Mammary epithelial cell (primary cell): ENCODE measurements at regions of chr1 and their contacts with region 1.

Region 1: GRCh38 chr1:7401814-7402537 is 369.1 kb upstream of the VAMP3 start:
- DNase-seq: peak; percentile 99
- H3K4me3 ChIP-seq: no peak overlapping the region
- H3K27ac ChIP-seq: peak overlapping the region; percentile 64
- H3K4me1 ChIP-seq: peaks cover 11% of the 10 kb centered on the region
- H3K27me3 ChIP-seq: no peaks in the 10 kb centered on the region
- CTCF ChIP-seq: no peak

Region 2: GRCh38 chr1:7224644-7225043 is 177.3 kb before region 1 on chr1:
- CTCF ChIA-PET with region 1: no interaction called
- dilution Hi-C with region 1: no loop called
- in situ Hi-C with region 1: no loop called
- intact Hi-C with region 1: loop called (anchors 5 kb)
- DNase-seq: no peak
- H3K4me3 ChIP-seq: no peak overlapping the region
- H3K27ac ChIP-seq: no peak overlapping the region
- H3K4me1 ChIP-seq: no peaks in the 10 kb centered on the region
- H3K27me3 ChIP-seq: no peaks in the 10 kb centered on the region
- CTCF ChIP-seq: peak; percentile 6 to 17

Region 3: GRCh38 chr1:7265771-7266648 is 136.0 kb before region 1 on chr1:
- CTCF ChIA-PET with region 1: no interaction called
- dilution Hi-C with region 1: no loop called
- in situ Hi-C with region 1: no loop called
- intact Hi-C with region 1: loop called (anchors 5 kb)
- DNase-seq: peak; percentile 98
- H3K4me3 ChIP-seq: peak overlapping the region in 2 of 3 experiments; percentile 9 to 12
- H3K27ac ChIP-seq: peak overlapping the region; percentile 94
- H3K4me1 ChIP-seq: peaks cover 35% of the 10 kb centered on the region
- H3K27me3 ChIP-seq: no peaks in the 10 kb centered on the region
- CTCF ChIP-seq: no peak

Region 4: GRCh38 chr1:7334475-7335035 is 67.4 kb before region 1 on chr1:
- CTCF ChIA-PET with region 1: no interaction called
- dilution Hi-C with region 1: loop called (anchors 5 kb)
- in situ Hi-C with region 1: no loop called
- intact Hi-C with region 1: loop called (anchors 2 kb)
- DNase-seq: peak; percentile 88
- H3K4me3 ChIP-seq: no peak overlapping the region
- H3K27ac ChIP-seq: no peak overlapping the region
- H3K4me1 ChIP-seq: peaks cover 21% of the 10 kb centered on the region
- H3K27me3 ChIP-seq: no peaks in the 10 kb centered on the region
- CTCF ChIP-seq: no peak

Region 5: GRCh38 chr1:7440154-7440870 is 38.3 kb after region 1 on chr1:
- CTCF ChIA-PET with region 1: no interaction called
- dilution Hi-C with region 1: loop called (anchors 5 kb)
- in situ Hi-C with region 1: no loop called
- intact Hi-C with region 1: no loop called
- DNase-seq: no peak
- H3K4me3 ChIP-seq: no peak overlapping the region
- H3K27ac ChIP-seq: no peak overlapping the region
- H3K4me1 ChIP-seq: no peaks in the 10 kb centered on the region
- H3K27me3 ChIP-seq: no peaks in the 10 kb centered on the region
- CTCF ChIP-seq: no peak

Region 6: DNA sequence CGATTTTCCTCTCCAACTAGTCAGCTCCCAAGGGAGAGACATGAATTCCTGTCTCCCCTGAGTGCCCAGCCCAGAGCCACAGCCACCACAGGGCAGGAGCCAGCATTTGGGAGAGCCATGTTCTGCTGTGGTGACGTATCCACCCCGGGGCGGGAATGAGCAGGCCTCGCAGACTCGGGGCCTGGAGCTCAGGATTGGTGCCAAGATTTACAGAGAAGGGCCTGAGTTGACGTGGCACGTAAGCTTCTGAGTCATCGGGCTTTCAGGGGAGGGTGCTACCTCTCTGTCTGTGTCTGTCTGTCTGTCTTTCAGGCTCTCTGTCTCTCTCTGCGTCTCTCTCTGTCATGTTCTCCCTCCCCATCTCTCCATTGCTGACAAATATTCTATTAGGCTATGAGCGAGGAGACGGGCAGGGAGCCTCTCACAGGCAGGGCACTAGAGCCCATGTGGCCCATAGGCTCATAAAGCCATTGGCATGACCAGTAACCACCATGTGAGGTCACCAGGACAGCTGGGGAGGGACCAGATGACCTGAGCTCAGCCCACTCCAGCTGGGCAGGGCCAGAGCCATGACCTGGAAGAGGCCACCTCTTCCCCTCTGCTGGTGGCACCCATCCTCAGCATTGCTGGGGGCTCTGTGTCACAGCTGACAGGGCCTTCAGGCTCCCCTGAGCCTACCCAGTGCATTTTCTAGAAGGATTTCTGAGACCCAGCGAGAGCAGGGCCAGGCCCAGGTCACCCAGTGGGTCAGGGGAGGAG is 69.1 kb after region 1 on chr1:
- CTCF ChIA-PET with region 1: no interaction called
- dilution Hi-C with region 1: loop called (anchors 5 kb)
- in situ Hi-C with region 1: no loop called
- intact Hi-C with region 1: loop called (anchors 2 kb)
- DNase-seq: peak; percentile 98
- H3K4me3 ChIP-seq: no peak overlapping the region
- H3K27ac ChIP-seq: peak overlapping the region; percentile 70
- H3K4me1 ChIP-seq: peaks cover 38% of the 10 kb centered on the region
- H3K27me3 ChIP-seq: no peaks in the 10 kb centered on the region
- CTCF ChIP-seq: no peak

Region 7: GRCh38 chr1:7478809-7479499 is 77.0 kb after region 1 on chr1:
- CTCF ChIA-PET with region 1: no interaction called
- dilution Hi-C with region 1: loop called (anchors 5 kb)
- in situ Hi-C with region 1: no loop called
- intact Hi-C with region 1: no loop called
- DNase-seq: peak; percentile 55
- H3K4me3 ChIP-seq: no peak overlapping the region
- H3K27ac ChIP-seq: no peak overlapping the region
- H3K4me1 ChIP-seq: peaks cover 2% of the 10 kb centered on the region
- H3K27me3 ChIP-seq: no peaks in the 10 kb centered on the region
- CTCF ChIP-seq: no peak

Region 8: GRCh38 chr1:7616076-7616832 is 214.3 kb after region 1 on chr1:
- CTCF ChIA-PET with region 1: no interaction called
- dilution Hi-C with region 1: no loop called
- in situ Hi-C with region 1: no loop called
- intact Hi-C with region 1: no loop called
- DNase-seq: peak; percentile 12
- H3K4me3 ChIP-seq: no peak overlapping the region
- H3K27ac ChIP-seq: no peak overlapping the region
- H3K4me1 ChIP-seq: no peaks in the 10 kb centered on the region
- H3K27me3 ChIP-seq: no peaks in the 10 kb centered on the region
- CTCF ChIP-seq: no peak

Region 9: DNA sequence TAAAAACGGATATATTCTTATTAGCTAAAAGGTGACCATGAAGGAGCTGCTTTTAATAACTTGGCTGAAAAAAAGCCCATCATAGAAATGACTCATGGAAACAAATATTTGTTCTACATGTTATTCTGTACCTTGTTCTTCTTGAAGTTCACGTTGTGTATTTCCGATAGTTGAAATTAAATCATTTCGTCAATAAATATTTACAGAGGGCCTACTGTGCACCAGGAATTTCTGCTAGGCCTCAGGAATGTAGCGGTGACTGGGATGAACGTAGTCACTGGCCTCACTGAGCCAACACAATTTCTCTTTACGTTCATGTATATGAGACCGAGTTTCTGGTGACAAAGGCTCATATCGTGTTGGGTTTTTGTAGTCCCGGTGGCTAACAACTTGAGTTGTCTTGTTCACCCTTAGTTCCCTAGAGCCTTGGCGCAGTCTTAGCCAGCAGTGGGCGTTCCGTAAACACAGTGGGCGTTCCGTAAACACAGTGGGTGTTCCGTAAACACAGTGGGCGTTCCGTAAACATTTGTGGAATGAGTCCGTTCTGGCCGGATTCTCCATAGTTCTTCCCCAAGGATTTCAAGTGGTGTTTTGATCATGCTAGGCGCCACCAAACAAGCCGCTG is 315.9 kb after region 1 on chr1:
- CTCF ChIA-PET with region 1: no interaction called
- dilution Hi-C with region 1: no loop called
- in situ Hi-C with region 1: no loop called
- intact Hi-C with region 1: no loop called
- DNase-seq: no peak
- H3K4me3 ChIP-seq: no peak overlapping the region
- H3K27ac ChIP-seq: no peak overlapping the region
- H3K4me1 ChIP-seq: no peaks in the 10 kb centered on the region
- H3K27me3 ChIP-seq: no peaks in the 10 kb centered on the region
- CTCF ChIP-seq: no peak